ENCODE measurements at regions of chr9 and their contacts with region 1.

Region 1: DNA sequence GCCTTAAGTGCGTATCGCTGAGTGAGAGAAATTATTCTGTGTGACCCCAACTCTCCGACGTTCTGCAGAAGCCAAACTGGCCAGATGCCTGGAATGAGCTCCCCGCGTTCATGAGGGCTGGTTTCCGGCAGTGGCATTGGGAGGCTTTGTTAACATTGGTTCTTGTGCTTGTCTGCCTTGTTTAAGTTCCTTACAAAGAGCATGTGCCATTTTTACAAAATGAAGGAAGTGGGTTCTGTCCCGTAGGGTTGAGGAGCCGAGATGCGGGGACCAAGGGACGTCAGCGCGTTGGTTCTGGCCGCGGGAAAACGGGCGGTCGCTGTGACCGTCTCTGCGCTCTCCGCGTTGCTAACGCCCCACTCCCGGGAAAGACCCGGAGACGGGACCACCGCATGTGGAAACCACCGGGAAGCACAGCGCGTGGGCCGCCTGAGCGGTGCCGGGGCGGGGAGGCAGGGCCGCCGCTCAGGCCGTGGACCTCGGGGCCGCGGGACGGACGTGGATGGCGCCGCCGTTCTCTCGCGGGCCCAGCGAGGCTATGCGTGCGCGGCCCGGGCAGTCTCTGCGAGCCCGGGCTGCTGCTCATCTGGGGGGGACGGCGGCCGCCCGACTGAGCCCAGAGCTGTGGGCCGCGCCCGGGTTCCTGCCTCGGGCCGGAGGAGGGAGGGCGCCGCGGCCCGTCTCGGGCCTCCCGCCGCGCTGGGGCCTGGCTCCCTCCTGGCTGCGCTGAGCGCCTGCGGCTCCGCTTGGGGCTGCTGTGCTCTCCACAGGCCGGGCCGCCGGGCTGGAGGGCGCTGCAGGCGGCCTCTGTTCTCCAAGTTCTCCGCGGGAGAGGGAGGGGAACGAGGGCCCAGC is 13.4 kb downstream of the RABL6 start:
- DNase-seq: no peak
- H3K4me3 ChIP-seq: peak overlapping the region; percentile 23 to 62 (median 40)
- H3K27ac ChIP-seq: no peak overlapping the region
- H3K4me1 ChIP-seq: peaks cover 0 to 11% (median 5%) of the 10 kb centered on the region in 4 experiments; a peak in 4 of 7 replicates
- H3K27me3 ChIP-seq: 0 out of 7 replicates have a peak, but pooled peaks cover 0 to 2% (median 0%) of the 10 kb centered on the region in 4 experiments
- CTCF ChIP-seq: no peak
- EP300 ChIP-seq: no peak
- POLR2A ChIP-seq: no peak
- RAD21 ChIP-seq: no peak

Region 2: GRCh38 chr9:136840140-136840687 is 19.0 kb after region 1 on chr9:
- CTCF ChIA-PET with region 1: interaction called, 131 read pairs
- POLR2A ChIA-PET with region 1: interaction called, 44 read pairs
- DNase-seq: no peak
- H3K4me3 ChIP-seq: no peak overlapping the region
- H3K27ac ChIP-seq: no peak overlapping the region
- H3K4me1 ChIP-seq: peaks cover 5 to 24% (median 16%) of the 10 kb centered on the region in 4 experiments
- H3K27me3 ChIP-seq: no peaks in the 10 kb centered on the region
- CTCF ChIP-seq: no peak
- EP300 ChIP-seq: no peak
- POLR2A ChIP-seq: no peak; a peak in 1 of 3 replicates
- RAD21 ChIP-seq: no peak

Region 3: DNA sequence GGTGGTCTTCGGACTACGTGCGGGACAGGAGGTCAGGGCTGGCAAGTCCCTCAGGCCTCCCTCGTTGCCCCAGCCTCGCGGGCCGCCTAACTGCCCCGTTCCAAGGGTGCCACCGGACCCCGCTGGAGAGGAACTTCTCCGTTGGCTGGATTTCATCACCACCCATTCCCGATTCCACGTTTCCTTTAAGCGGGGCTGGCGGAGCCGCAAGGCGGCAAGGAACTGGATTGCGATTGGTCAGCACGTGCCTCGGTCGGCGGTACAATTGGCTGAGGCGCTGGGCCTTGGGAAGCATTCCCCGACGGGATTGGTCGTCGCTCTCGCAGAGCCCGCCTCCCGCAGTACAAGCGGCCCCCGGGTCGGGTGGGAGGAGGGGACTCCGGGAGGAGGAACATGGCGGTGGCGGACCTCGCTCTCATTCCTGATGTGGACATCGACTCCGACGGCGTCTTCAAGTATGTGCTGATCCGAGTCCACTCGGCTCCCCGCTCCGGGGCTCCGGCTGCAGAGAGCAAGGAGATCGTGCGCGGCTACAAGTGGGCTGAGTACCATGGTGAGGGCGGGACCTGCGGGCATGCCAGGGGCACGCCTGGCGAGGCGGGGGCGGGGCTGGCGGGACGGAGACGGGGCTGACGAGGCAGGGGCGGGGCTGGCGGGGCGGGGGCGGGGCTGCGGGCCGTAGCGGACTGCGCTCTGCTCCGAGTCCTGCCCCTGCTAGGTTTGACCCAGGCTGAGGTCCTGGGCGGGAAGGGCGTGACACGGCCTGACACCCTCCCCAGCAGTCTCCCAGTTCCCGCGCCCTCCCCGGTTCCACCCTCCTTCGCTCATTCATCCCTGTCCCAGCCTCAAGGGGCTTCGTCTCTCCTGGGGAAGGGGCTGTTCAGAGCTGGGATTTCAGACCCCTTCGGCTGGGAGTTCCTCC is 28.1 kb after region 1 on chr9 and contains the start of gene PHPT1:
- CTCF ChIA-PET with region 1: interaction called, 131 read pairs
- POLR2A ChIA-PET with region 1: interaction called, 44 read pairs
- DNase-seq: peak; percentile 98
- H3K4me3 ChIP-seq: peak within 1 kb of the TSS; percentile 81 to 89 (median 84)
- H3K27ac ChIP-seq: peak within 1 kb of the TSS; percentile 90
- H3K4me1 ChIP-seq: peaks cover 0 to 18% (median 8%) of the 10 kb centered on the region in 4 experiments; a peak in 5 of 7 replicates
- H3K27me3 ChIP-seq: peaks cover 2 to 12% (median 7%) of the 10 kb centered on the region in 4 experiments; a peak in 6 of 7 replicates
- CTCF ChIP-seq: no peak
- EP300 ChIP-seq: no peak
- POLR2A ChIP-seq: peak in 1 of 2 experiments; percentile 99; a peak in 2 of 3 replicates
- RAD21 ChIP-seq: no peak
- total RNA-seq, gene PHPT1: 109 and 111 TPM in 2 replicates

Region 4: GRCh38 chr9:137086531-137087408 is 265.6 kb after region 1 on chr9 and contains the start of gene MAN1B1:
- CTCF ChIA-PET with region 1: no interaction called
- POLR2A ChIA-PET with region 1: no interaction called
- DNase-seq: peak; percentile 97 to 99
- H3K4me3 ChIP-seq: peak within 1 kb of the TSS; percentile 55 to 81 (median 71)
- H3K27ac ChIP-seq: no peak within 1 kb of the TSS
- H3K4me1 ChIP-seq: peaks cover 0 to 10% (median 4%) of the 10 kb centered on the region in 4 experiments; a peak in 4 of 7 replicates
- H3K27me3 ChIP-seq: peaks cover 0 to 11% (median 3%) of the 10 kb centered on the region in 4 experiments; a peak in 5 of 7 replicates
- CTCF ChIP-seq: peak in 1 of 3 experiments; percentile 6; a peak in 1 of 4 replicates
- EP300 ChIP-seq: no peak
- POLR2A ChIP-seq: peak in 1 of 2 experiments; percentile 73; a peak in 1 of 3 replicates
- RAD21 ChIP-seq: no peak
- total RNA-seq, gene MAN1B1: 35.1 and 36.3 TPM in 2 replicates

Measured in H1 (cell line).